ENCODE measurements at regions of chr6 and their contacts with region 1.

Region 1: GRCh38 chr6:116217069-116217468 is 36.8 kb downstream of the TSPYL4 start:
- DNase-seq: peak; percentile 62
- H3K4me3 Mint-ChIP-seq: no peak overlapping the region
- H3K27ac Mint-ChIP-seq: no peak overlapping the region
- H3K4me1 Mint-ChIP-seq: no peaks in the 10 kb centered on the region
- H3K27me3 Mint-ChIP-seq: no peaks in the 10 kb centered on the region
- CTCF ChIP-seq: peak; percentile 63

Region 2: GRCh38 chr6:115634887-115635286 is 582.2 kb before region 1 on chr6:
- CTCF ChIA-PET with region 1: no interaction called
- POLR2A ChIA-PET with region 1: no interaction called
- intact Hi-C with region 1: no loop called
- DNase-seq: no peak
- H3K4me3 Mint-ChIP-seq: no peak overlapping the region
- H3K27ac Mint-ChIP-seq: no peak overlapping the region
- H3K4me1 Mint-ChIP-seq: no peaks in the 10 kb centered on the region
- H3K27me3 Mint-ChIP-seq: peaks cover 17% of the 10 kb centered on the region
- CTCF ChIP-seq: no peak

Region 3: GRCh38 chr6:115982453-115982852 is 234.6 kb before region 1 on chr6:
- CTCF ChIA-PET with region 1: no interaction called
- POLR2A ChIA-PET with region 1: no interaction called
- intact Hi-C with region 1: no loop called
- DNase-seq: no peak
- H3K4me3 Mint-ChIP-seq: no peak overlapping the region
- H3K27ac Mint-ChIP-seq: no peak overlapping the region
- H3K4me1 Mint-ChIP-seq: no peaks in the 10 kb centered on the region
- H3K27me3 Mint-ChIP-seq: no peaks in the 10 kb centered on the region
- CTCF ChIP-seq: no peak

Region 4: GRCh38 chr6:116111552-116112528 is 105.2 kb before region 1 on chr6:
- CTCF ChIA-PET with region 1: interaction called, 13 read pairs
- POLR2A ChIA-PET with region 1: no interaction called
- intact Hi-C with region 1: loop called (anchors 1 kb)
- DNase-seq: peak; percentile 63
- H3K4me3 Mint-ChIP-seq: no peak overlapping the region
- H3K27ac Mint-ChIP-seq: no peak overlapping the region
- H3K4me1 Mint-ChIP-seq: no peaks in the 10 kb centered on the region
- H3K27me3 Mint-ChIP-seq: no peaks in the 10 kb centered on the region
- CTCF ChIP-seq: peak; percentile 48

Region 5: GRCh38 chr6:116253505-116254296 is 36.6 kb after region 1 on chr6 and contains the start of gene TSPYL4:
- CTCF ChIA-PET with region 1: interaction called, 13 read pairs
- POLR2A ChIA-PET with region 1: interaction called, 16 read pairs
- intact Hi-C with region 1: no loop called
- DNase-seq: peak; percentile 96
- H3K4me3 Mint-ChIP-seq: no peak within 1 kb of the TSS
- H3K27ac Mint-ChIP-seq: no peak within 1 kb of the TSS
- H3K4me1 Mint-ChIP-seq: peaks cover 22% of the 10 kb centered on the region
- H3K27me3 Mint-ChIP-seq: no peaks in the 10 kb centered on the region
- CTCF ChIP-seq: no peak
- total RNA-seq, gene TSPYL4: 9.1 and 9.8 TPM in 2 replicates

Region 6: DNA sequence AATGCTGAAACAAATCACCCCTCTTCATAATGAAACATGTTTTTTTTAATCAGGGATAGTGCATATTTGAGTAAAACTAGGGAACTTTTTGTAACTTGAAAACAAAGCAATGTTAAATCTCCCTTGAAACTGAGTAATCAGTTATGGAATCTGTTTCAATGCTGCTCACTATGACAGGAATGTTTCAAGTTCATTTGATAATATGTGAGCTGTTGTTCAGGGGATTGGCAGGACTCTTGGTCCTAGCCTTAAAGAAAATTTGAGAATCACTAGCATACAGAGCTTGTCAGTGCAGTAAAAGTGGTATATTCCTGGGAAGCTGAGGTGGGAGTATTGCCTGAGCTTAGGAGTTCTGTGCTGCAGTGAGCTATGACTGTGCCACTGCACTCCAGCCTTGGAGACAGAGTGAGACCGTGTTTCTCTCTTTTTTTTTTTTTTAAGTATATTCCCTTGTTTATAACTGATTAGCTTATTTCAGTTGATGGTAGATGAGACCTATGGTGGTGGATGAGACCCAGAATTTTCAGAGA is 222.5 kb after region 1 on chr6:
- CTCF ChIA-PET with region 1: no interaction called
- POLR2A ChIA-PET with region 1: no interaction called
- intact Hi-C with region 1: no loop called
- DNase-seq: no peak
- H3K4me3 Mint-ChIP-seq: no peak overlapping the region
- H3K27ac Mint-ChIP-seq: no peak overlapping the region
- H3K4me1 Mint-ChIP-seq: peaks cover 8% of the 10 kb centered on the region
- H3K27me3 Mint-ChIP-seq: no peaks in the 10 kb centered on the region
- CTCF ChIP-seq: no peak

Region 7: DNA sequence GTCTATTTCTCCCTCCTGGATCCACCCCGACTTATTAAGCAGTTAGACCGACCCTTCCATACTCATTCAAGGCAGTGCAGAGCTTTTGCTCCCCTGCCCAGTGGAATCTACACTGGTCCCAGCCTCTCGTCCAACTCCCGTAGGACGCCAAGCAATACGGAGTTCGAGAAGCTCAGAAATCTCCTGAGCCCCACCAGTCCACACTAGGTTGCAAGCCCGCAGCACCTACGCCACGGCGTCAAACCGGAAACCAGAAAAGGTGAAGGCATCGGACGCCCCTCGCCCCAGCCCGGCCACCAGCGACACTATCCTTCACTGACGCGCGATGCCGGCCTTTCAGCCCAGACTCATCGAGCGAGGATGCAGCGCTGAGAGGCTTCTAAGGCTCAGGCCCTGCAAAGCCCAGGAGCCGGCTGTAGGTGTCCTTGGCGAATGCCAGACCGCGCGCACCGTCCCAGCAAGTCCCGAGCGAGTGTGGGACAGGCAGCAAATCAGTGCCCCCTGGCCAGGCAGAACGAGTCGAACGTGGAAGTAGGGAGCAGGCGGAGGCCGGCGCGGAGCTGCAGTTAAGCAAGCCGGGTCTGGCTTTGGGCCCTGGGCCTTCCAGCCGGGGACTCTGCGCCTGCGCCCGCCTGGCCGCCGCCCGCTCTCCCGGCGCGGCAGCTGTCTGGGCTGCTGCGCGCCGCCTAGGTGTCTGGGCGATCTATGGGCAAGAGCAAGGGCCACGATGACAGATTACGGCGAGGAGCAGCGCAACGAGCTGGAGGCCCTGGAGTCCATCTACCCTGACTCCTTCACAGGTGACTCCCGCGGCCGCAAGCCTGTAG is 354.0 kb after region 1 on chr6 and contains the start of gene RWDD1:
- CTCF ChIA-PET with region 1: interaction called, 3 read pairs
- POLR2A ChIA-PET with region 1: interaction called, 11 read pairs
- intact Hi-C with region 1: no loop called
- DNase-seq: peak; percentile 98
- H3K4me3 Mint-ChIP-seq: peak within 1 kb of the TSS; percentile 98
- H3K27ac Mint-ChIP-seq: peak within 1 kb of the TSS; percentile 98
- H3K4me1 Mint-ChIP-seq: peaks cover 25% of the 10 kb centered on the region
- H3K27me3 Mint-ChIP-seq: no peaks in the 10 kb centered on the region
- CTCF ChIP-seq: no peak
- total RNA-seq, gene RWDD1: 41.6 and 57.2 TPM in 2 replicates

Region 8: GRCh38 chr6:116847227-116847626 is 630.2 kb after region 1 on chr6:
- CTCF ChIA-PET with region 1: interaction called, 3 read pairs
- POLR2A ChIA-PET with region 1: no interaction called
- intact Hi-C with region 1: loop called (anchors 5 kb)
- DNase-seq: peak; percentile 47
- H3K4me3 Mint-ChIP-seq: no peak overlapping the region
- H3K27ac Mint-ChIP-seq: no peak overlapping the region
- H3K4me1 Mint-ChIP-seq: no peaks in the 10 kb centered on the region
- H3K27me3 Mint-ChIP-seq: peaks cover 63% of the 10 kb centered on the region
- CTCF ChIP-seq: peak; percentile 29